Endothelial cell of umbilical vein (primary cell): ENCODE measurements at regions of chr14 and their contacts with region 1.

Region 1: GRCh38 chr14:80587075-80587724 is 354.3 kb downstream of the CEP128 start:
- DNase-seq: peak; percentile 48
- H3K4me3 ChIP-seq: no peak overlapping the region
- H3K27ac ChIP-seq: no peak overlapping the region
- H3K4me1 ChIP-seq: peaks cover 7% of the 10 kb centered on the region
- H3K27me3 ChIP-seq: no peaks in the 10 kb centered on the region
- CTCF ChIP-seq: peak; percentile 40 to 47
- POLR2A ChIP-seq: no peak

Region 2: GRCh38 chr14:78959674-78960264 is 1627.4 kb before region 1 on chr14:
- CTCF ChIA-PET with region 1: interaction called, 13 read pairs
- POLR2A ChIA-PET with region 1: no interaction called
- dilution Hi-C with region 1: no loop called
- intact Hi-C with region 1: no loop called
- DNase-seq: peak; percentile 74
- H3K4me3 ChIP-seq: no peak overlapping the region
- H3K27ac ChIP-seq: no peak overlapping the region
- H3K4me1 ChIP-seq: peaks cover 12% of the 10 kb centered on the region
- H3K27me3 ChIP-seq: no peaks in the 10 kb centered on the region
- CTCF ChIP-seq: peak; percentile 84 to 87
- POLR2A ChIP-seq: no peak

Region 3: GRCh38 chr14:80055667-80056496 is 531.3 kb before region 1 on chr14:
- CTCF ChIA-PET with region 1: interaction called, 15 read pairs
- POLR2A ChIA-PET with region 1: no interaction called
- dilution Hi-C with region 1: no loop called
- intact Hi-C with region 1: loop called (anchors 10 kb)
- DNase-seq: peak; percentile 47
- H3K4me3 ChIP-seq: no peak overlapping the region
- H3K27ac ChIP-seq: no peak overlapping the region
- H3K4me1 ChIP-seq: no peaks in the 10 kb centered on the region
- H3K27me3 ChIP-seq: no peaks in the 10 kb centered on the region
- CTCF ChIP-seq: peak; percentile 46 to 61
- POLR2A ChIP-seq: no peak

Region 4: DNA sequence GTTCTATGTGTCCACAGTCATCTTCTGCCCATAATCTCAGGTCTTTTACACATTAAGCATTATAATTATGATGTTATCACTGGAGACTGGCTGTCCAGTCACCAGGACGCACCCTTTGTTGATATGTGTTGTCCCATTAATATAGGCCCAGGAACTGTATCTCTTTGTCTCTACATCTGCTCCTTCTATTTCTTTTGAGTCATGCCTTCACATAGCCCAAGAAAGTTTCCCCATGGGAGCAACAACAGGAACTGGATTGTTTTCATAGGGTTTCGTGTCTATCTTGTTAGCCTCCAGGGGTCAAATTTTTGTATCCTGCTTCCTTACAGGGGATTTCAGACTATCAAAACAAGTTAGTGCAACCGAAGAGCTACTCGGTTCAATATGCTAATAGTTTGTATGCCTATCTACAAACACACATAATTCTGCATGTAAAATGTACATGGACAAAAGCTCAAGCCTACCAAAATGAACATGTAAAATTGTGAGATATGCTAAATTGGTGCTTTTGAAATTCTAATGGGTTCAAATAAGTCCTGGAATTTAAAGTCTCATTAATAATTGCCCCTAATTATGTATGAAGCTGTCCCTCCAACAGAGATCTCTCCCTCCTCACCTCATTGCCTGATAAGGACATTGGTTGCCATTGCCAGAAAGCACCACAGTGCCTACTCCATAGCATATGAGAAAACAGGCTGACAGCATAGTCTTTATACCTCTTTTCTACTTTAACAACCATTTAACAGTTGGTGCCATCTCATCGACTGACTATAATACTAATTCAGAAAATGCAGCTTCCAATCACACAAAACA is 276.1 kb before region 1 on chr14:
- CTCF ChIA-PET with region 1: no interaction called
- POLR2A ChIA-PET with region 1: no interaction called
- dilution Hi-C with region 1: no loop called
- intact Hi-C with region 1: no loop called
- DNase-seq: peak; percentile 77
- H3K4me3 ChIP-seq: no peak overlapping the region
- H3K27ac ChIP-seq: no peak overlapping the region
- H3K4me1 ChIP-seq: no peaks in the 10 kb centered on the region
- H3K27me3 ChIP-seq: no peaks in the 10 kb centered on the region
- CTCF ChIP-seq: no peak
- POLR2A ChIP-seq: no peak

Region 5: DNA sequence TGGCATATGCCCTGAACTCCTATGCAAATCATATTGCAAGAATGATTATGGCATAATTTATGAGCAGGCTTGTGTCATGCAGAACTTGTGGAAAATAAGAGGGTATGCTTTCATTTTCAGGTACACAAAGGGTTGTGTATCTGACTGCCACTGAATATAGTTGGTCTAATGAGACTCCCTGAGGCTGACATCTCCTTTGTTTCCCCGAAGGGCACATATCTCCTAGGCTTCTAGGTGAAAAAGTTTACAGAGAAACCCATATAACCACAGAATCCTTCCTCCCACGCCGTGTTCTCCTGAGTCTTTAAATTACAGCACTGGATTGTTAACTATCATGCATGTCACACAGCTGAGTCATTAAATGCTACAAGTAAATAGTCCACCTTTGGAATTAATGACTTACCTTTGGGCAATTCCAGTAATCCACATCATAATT is 19.2 kb before region 1 on chr14:
- CTCF ChIA-PET with region 1: interaction called, 12 read pairs
- POLR2A ChIA-PET with region 1: no interaction called
- dilution Hi-C with region 1: no loop called
- intact Hi-C with region 1: no loop called
- DNase-seq: no peak
- H3K4me3 ChIP-seq: no peak overlapping the region
- H3K27ac ChIP-seq: no peak overlapping the region
- H3K4me1 ChIP-seq: no peaks in the 10 kb centered on the region
- H3K27me3 ChIP-seq: no peaks in the 10 kb centered on the region
- CTCF ChIP-seq: no peak
- POLR2A ChIP-seq: no peak

Region 6: GRCh38 chr14:80784820-80785219 is 197.6 kb after region 1 on chr14:
- CTCF ChIA-PET with region 1: interaction called, 15 read pairs
- POLR2A ChIA-PET with region 1: no interaction called
- dilution Hi-C with region 1: no loop called
- intact Hi-C with region 1: no loop called
- DNase-seq: no peak
- H3K4me3 ChIP-seq: no peak overlapping the region
- H3K27ac ChIP-seq: no peak overlapping the region
- H3K4me1 ChIP-seq: no peaks in the 10 kb centered on the region
- H3K27me3 ChIP-seq: no peaks in the 10 kb centered on the region
- CTCF ChIP-seq: no peak
- POLR2A ChIP-seq: no peak